ENCODE measurements at regions of chr14 and their contacts with region 1.

Region 1: GRCh38 chr14:53217295-53217994 is 64.3 kb upstream of the DDHD1 start:
- DNase-seq: peak; percentile 87
- ATAC-seq: peak; percentile 99
- H3K4me3 Mint-ChIP-seq: peak overlapping the region; percentile 80
- H3K27ac Mint-ChIP-seq: peak overlapping the region; percentile 79
- H3K4me1 Mint-ChIP-seq: peaks cover 6% of the 10 kb centered on the region
- H3K27me3 Mint-ChIP-seq: no peaks in the 10 kb centered on the region
- CTCF ChIP-seq: peak; percentile 74

Region 2: DNA sequence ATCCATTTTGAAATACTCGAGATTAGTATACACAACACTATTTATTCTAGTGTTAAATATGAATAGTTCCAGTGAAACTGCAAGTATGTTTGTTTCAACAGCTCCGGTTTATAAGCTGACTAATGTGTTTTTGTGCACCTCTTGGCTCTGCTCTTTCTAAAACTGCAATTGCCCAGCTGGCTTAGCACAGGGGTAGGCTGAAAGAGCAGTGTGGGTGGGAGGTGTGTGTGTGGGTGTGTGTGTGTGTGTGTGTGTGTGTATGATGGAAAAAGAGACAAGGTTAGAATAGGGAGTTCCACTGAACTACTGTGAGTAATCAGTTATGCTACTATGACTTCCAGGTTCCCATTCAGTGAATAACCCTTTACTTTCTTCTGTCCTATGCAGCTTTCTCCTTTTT is 26.5 kb before region 1 on chr14:
- CTCF ChIA-PET with region 1: interaction called, 14 read pairs
- POLR2A ChIA-PET with region 1: no interaction called
- intact Hi-C with region 1: no loop called
- DNase-seq: peak; percentile 79
- ATAC-seq: peak; percentile 96
- H3K4me3 Mint-ChIP-seq: peak overlapping the region; percentile 36
- H3K27ac Mint-ChIP-seq: peak overlapping the region; percentile 89
- H3K4me1 Mint-ChIP-seq: peaks cover 31% of the 10 kb centered on the region
- H3K27me3 Mint-ChIP-seq: no peaks in the 10 kb centered on the region
- CTCF ChIP-seq: no peak

Region 3: GRCh38 chr14:53432378-53432802 is 214.9 kb after region 1 on chr14:
- CTCF ChIA-PET with region 1: no interaction called
- POLR2A ChIA-PET with region 1: no interaction called
- intact Hi-C with region 1: no loop called
- DNase-seq: no peak
- ATAC-seq: peak; percentile 58
- H3K4me3 Mint-ChIP-seq: no peak overlapping the region
- H3K27ac Mint-ChIP-seq: no peak overlapping the region
- H3K4me1 Mint-ChIP-seq: no peaks in the 10 kb centered on the region
- H3K27me3 Mint-ChIP-seq: no peaks in the 10 kb centered on the region
- CTCF ChIP-seq: peak; percentile 49

Measured in activated CD8-positive, alpha-beta T cell treated with anti-CD3 and anti-CD28 coated beads for 36 hours (primary cell).